Activated naive CD4-positive, alpha-beta T cell treated with anti-CD3 and anti-CD28 coated beads, Interleukin-2, amount 10 ng/mL, durations not matched to agents 7 days and 5 days (primary cell): ENCODE measurements at regions of chr15 and their contacts with region 1.

Region 1: DNA sequence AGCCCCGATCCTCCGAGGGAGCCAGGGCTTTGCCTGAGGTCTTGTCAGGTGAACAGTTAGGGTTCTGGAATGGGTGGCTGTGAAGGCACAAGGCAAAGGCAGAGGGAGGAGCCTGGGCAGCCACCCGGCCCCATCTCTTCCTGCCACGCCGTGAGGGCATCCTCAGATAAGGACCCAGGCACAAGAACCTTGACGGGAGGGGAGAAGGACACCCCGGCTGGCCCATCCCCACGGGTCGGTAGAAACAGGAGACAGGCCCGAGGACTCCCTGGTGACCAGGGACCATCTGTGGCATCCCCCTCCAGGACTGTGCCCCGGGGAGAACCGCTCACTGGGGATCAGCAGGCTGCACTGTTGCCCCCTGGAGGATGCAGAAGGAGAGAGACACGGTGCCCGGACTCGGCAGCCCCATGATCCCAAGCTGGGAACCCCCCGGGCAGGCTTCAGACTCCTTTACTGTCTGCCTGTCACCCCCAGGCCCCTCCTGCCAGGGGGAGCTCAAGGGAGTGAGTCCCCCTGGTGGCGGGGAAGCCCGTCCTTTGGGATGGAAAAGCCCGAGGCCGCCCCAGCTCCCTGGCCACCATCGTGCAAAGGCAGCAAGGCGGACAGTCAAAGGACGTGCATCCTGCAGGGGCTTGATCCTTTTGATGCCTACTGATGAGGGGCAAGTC is 12.3 kb upstream of the PCSK6 start:
- DNase-seq: peak; percentile 68
- H3K4me3 Mint-ChIP-seq: peak overlapping the region; percentile 32
- H3K27ac Mint-ChIP-seq: no peak overlapping the region
- H3K4me1 Mint-ChIP-seq: peaks cover 36% of the 10 kb centered on the region
- H3K27me3 Mint-ChIP-seq: peaks cover 67% of the 10 kb centered on the region

Region 2: DNA sequence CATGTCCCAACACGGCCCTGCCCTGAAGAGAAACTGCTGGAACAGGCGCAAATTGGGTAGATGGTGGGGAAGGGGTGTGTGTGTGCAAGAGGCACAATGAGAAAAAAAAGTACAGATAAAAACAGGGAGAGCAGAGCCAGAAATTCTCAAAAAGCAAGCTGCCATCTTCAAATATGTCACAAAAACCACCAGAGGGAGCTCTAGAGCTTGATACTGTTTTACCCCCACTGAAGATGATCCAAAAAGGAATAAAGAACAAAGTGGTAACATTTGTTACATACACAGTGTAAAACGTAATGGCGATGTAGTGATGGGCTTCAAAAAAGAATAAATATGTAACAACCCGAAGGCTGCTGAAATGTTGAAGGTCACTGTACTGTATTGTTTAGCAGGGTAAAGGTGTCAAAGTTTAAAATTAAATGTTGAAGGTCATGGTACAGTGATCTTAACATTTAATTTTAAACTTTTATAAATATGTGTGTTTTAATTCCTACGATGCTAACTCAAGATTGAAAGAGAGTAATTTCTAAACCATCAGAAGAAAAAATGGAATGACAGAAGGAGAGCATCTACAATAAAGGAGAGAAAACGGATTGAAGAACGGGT is 212.8 kb before region 1 on chr15:
- CTCF ChIA-PET with region 1: interaction called, 21 read pairs
- DNase-seq: no peak
- H3K4me3 Mint-ChIP-seq: no peak overlapping the region
- H3K27ac Mint-ChIP-seq: peak overlapping the region; percentile 50
- H3K4me1 Mint-ChIP-seq: peaks cover 54% of the 10 kb centered on the region
- H3K27me3 Mint-ChIP-seq: no peaks in the 10 kb centered on the region

Region 3: GRCh38 chr15:101294731-101295606 is 206.9 kb before region 1 on chr15 and contains the start of gene SNRPA1:
- CTCF ChIA-PET with region 1: interaction called, 52 read pairs
- DNase-seq: peak; percentile 98
- H3K4me3 Mint-ChIP-seq: peak within 1 kb of the TSS; percentile 87
- H3K27ac Mint-ChIP-seq: peak within 1 kb of the TSS; percentile 91
- H3K4me1 Mint-ChIP-seq: peaks cover 45% of the 10 kb centered on the region
- H3K27me3 Mint-ChIP-seq: no peaks in the 10 kb centered on the region

Region 4: GRCh38 chr15:101307048-101307896 is 194.6 kb before region 1 on chr15:
- CTCF ChIA-PET with region 1: interaction called, 52 read pairs
- DNase-seq: no peak
- H3K4me3 Mint-ChIP-seq: no peak overlapping the region
- H3K27ac Mint-ChIP-seq: no peak overlapping the region
- H3K4me1 Mint-ChIP-seq: no peaks in the 10 kb centered on the region
- H3K27me3 Mint-ChIP-seq: peaks cover 9% of the 10 kb centered on the region

Region 5: GRCh38 chr15:101320501-101321052 is 181.3 kb before region 1 on chr15:
- CTCF ChIA-PET with region 1: interaction called, 46 read pairs
- DNase-seq: peak; percentile 83
- H3K4me3 Mint-ChIP-seq: peak overlapping the region; percentile 58
- H3K27ac Mint-ChIP-seq: peak overlapping the region; percentile 89
- H3K4me1 Mint-ChIP-seq: peaks cover 20% of the 10 kb centered on the region
- H3K27me3 Mint-ChIP-seq: peaks cover 9% of the 10 kb centered on the region

Region 6: GRCh38 chr15:101476756-101477155 is 25.1 kb before region 1 on chr15:
- CTCF ChIA-PET with region 1: no interaction called
- DNase-seq: no peak
- H3K4me3 Mint-ChIP-seq: no peak overlapping the region
- H3K27ac Mint-ChIP-seq: no peak overlapping the region
- H3K4me1 Mint-ChIP-seq: no peaks in the 10 kb centered on the region
- H3K27me3 Mint-ChIP-seq: peaks cover 28% of the 10 kb centered on the region

Region 7: GRCh38 chr15:101520395-101520794 is 18.6 kb after region 1 on chr15:
- CTCF ChIA-PET with region 1: interaction called, 13 read pairs
- DNase-seq: no peak
- H3K4me3 Mint-ChIP-seq: no peak overlapping the region
- H3K27ac Mint-ChIP-seq: no peak overlapping the region
- H3K4me1 Mint-ChIP-seq: peaks cover 10% of the 10 kb centered on the region
- H3K27me3 Mint-ChIP-seq: peaks cover 11% of the 10 kb centered on the region

Region 8: GRCh38 chr15:101641166-101641764 is 139.4 kb after region 1 on chr15:
- CTCF ChIA-PET with region 1: interaction called, 20 read pairs
- DNase-seq: peak; percentile 88
- H3K4me3 Mint-ChIP-seq: no peak overlapping the region
- H3K27ac Mint-ChIP-seq: peak overlapping the region; percentile 89
- H3K4me1 Mint-ChIP-seq: peaks cover 28% of the 10 kb centered on the region
- H3K27me3 Mint-ChIP-seq: no peaks in the 10 kb centered on the region